ENCODE measurements at regions of chr3 and their contacts with region 1.

Region 1: GRCh38 chr3:16496408-16497222 is 16.9 kb downstream of the RFTN1 start:
- DNase-seq: no peak
- H3K4me3 Mint-ChIP-seq: peak overlapping the region; percentile 38
- H3K27ac Mint-ChIP-seq: peak overlapping the region; percentile 79
- H3K4me1 Mint-ChIP-seq: peaks cover 65% of the 10 kb centered on the region
- H3K27me3 Mint-ChIP-seq: no peaks in the 10 kb centered on the region

Region 2: GRCh38 chr3:16482770-16483531 is 13.7 kb before region 1 on chr3:
- intact Hi-C with region 1: loop called (anchors 1 kb)
- DNase-seq: peak; percentile 26
- H3K4me3 Mint-ChIP-seq: peak overlapping the region; percentile 75
- H3K27ac Mint-ChIP-seq: peak overlapping the region; percentile 75
- H3K4me1 Mint-ChIP-seq: peaks cover 84% of the 10 kb centered on the region
- H3K27me3 Mint-ChIP-seq: no peaks in the 10 kb centered on the region

Measured in activated T-helper 1 cell treated with anti-CD3 and anti-CD28 coated beads, Interleukin-12 subunit alpha, Interleukin-12 subunit beta, Interleukin-2, Interleukin-4 antibody, amounts not matched to agents 30 ng/mL and 10 ng/mL and 1 ng/mL, durations not matched to agents 14 hours and 24 hours and 36 hours (primary cell).